Left cardiac atrium (tissue), 4 donors: ENCODE measurements at regions of chr4 and their contacts with region 1.

Region 1: GRCh38 chr4:142883040-142883832 is 37.1 kb upstream of the INPP4B start:
- DNase-seq: no peak
- ATAC-seq: no peak

Region 2: DNA sequence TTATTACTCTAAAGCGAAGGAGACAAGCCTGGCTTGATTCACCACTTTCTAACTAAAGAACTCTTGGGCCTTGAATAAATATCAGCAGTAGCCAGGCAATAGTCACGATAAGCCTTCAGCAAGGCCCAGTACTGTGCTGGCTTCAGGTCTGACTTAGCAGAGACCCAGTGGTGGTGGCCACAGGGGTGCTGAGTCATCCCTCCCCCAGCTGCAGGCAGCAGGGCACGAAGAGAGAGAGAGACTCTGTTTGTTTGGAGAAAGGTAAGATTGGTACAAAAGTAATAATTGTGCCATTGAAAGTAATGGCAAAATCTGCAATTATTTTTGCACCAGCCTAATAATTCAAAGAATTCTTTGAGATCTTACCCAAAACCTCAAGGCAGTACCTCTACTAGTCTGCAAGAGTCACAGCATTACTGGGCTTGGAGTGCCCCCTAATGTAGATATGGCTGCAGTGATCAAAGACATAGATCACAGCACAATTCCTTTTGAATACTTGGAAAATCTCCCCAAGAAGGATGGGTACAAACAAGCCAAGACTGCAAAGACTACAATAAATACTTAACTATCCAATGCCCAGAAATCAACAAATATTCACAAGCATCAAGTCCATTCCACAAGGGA is 142.0 kb after region 1 on chr4:
- intact Hi-C with region 1: loop called (anchors 5 kb)
- DNase-seq: no peak
- ATAC-seq: peak in 1 of 2 donors; percentile 69

Region 3: DNA sequence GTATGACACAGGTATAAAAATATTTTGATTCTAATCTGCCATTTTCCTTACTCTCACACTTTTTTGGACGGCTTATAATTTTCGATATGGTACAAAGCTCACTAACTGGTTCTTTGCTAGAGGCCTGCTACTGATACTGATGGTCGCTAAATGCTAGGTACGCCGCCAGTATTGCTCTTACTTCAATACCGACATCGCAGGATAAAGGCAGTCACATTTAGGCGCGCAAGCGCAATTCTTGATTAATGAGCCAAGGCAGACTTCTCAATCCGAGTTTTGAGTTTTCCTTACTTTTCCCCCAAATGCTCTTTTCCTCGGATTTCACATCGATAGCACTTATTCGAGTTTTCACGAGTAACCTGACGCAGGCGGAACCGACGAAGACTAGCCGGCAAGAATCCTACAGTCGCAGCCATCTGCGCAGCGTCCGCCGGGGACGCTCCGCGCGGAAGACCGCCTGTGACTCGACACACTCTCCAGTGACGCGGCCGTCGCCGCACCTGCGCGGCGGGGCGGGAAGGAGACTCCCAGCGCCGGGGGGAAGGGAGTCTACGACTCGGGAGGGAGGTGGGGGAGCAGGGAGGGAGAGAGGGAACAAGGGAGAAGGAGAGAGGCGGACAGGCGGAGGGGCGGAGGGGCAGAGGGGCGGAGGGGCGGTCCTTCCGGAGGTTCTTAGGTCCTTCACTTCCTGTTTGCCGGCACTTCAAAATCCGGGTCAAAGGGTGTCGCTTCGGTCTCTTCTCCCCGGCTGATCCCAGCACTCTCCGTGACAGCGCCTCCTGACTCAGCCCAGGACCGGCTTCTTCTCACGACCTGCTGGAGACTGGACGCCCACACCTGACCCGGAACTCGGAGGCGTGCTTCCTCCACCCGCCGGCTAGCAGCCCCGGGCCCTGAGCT is 301.2 kb after region 1 on chr4 and contains the start of gene USP38:
- intact Hi-C with region 1: loop called in 1 of 2 experiments (anchors 10 kb)
- DNase-seq: peak; percentile 92
- ATAC-seq: peak; percentile 96
- total RNA-seq, gene USP38: 17.3 to 21.0 TPM